ENCODE measurements at regions of chr10 and their contacts with region 1.

Region 1: GRCh38 chr10:82680608-82681007 is 805.6 kb downstream of the NRG3 start:
- DNase-seq: no peak
- ATAC-seq: no peak
- H3K4me3 ChIP-seq: no peak overlapping the region
- H3K4me3 Mint-ChIP-seq: no peak overlapping the region
- H3K27ac ChIP-seq: no peak overlapping the region
- H3K27ac Mint-ChIP-seq: no peak overlapping the region
- H3K4me1 ChIP-seq: no peaks in the 10 kb centered on the region
- H3K4me1 Mint-ChIP-seq: no peaks in the 10 kb centered on the region
- H3K27me3 ChIP-seq: no peaks in the 10 kb centered on the region
- H3K27me3 Mint-ChIP-seq: no peaks in the 10 kb centered on the region

Region 2: DNA sequence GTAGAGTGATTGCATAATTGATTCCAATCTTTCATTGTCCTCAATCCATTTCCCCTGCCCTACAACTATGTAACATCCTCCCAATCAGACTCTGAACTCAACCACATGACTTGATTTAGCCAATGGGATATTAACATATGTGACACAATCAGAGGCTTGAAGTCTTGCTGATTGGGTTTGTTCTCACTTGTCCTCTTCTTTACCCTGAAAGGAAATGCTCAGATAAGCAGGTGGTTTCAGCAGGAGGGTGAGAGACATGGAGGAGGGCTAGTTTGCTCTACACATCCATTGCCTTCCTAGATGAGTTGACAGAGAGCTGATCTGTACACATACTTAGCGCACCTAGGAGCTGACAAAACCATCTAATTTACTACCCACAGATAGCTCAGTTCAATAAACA is 136.2 kb before region 1 on chr10:
- CTCF ChIA-PET with region 1: interaction called in 1 of 2 experiments, 10 read pairs
- POLR2A ChIA-PET with region 1: no interaction called
- DNase-seq: no peak
- ATAC-seq: no peak
- H3K4me3 ChIP-seq: no peak overlapping the region
- H3K4me3 Mint-ChIP-seq: no peak overlapping the region
- H3K27ac ChIP-seq: no peak overlapping the region
- H3K27ac Mint-ChIP-seq: no peak overlapping the region
- H3K4me1 ChIP-seq: no peaks in the 10 kb centered on the region
- H3K4me1 Mint-ChIP-seq: no peaks in the 10 kb centered on the region
- H3K27me3 ChIP-seq: no peaks in the 10 kb centered on the region
- H3K27me3 Mint-ChIP-seq: no peaks in the 10 kb centered on the region

Measured in T-cell (primary cell).